Panc1 (cell line): ENCODE measurements at regions of chr1 and their contacts with region 1.

Region 1: DNA sequence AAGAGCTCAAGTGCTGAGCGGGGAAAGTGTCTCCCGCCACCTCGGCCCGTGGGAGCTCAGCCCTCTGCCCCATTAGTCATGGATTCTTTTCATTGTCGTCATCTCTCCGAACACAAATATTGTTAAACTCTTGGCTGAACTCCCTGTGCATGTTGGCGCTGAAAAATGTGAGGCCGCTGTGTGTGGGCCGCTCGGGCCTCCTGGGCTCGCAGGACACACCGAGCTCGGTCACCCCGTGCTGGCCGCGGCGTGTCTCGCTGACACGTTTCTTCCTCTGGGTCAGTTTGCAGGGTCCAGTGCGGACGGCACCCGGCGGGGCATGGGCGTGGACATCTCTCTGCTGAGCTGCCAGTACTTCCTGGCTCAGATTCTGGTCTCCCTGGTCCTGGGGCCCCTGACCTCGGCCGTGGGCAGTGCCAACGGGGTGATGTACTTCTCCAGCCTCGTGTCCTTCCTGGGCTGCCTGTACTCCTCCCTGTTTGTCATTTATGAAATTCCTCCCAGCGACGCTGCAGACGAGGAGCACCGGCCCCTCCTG is 25.6 kb downstream of the SLC45A1 start:
- DNase-seq: peak; percentile 81
- ATAC-seq: peak; percentile 84
- H3K4me3 ChIP-seq: peak overlapping the region in 1 of 2 experiments; percentile 24; a peak in 1 of 4 replicates
- H3K27ac ChIP-seq: peak overlapping the region; percentile 90
- H3K4me1 ChIP-seq: peaks cover 26% of the 10 kb centered on the region
- H3K27me3 ChIP-seq: no peaks in the 10 kb centered on the region
- CTCF ChIP-seq: no peak

Region 2: DNA sequence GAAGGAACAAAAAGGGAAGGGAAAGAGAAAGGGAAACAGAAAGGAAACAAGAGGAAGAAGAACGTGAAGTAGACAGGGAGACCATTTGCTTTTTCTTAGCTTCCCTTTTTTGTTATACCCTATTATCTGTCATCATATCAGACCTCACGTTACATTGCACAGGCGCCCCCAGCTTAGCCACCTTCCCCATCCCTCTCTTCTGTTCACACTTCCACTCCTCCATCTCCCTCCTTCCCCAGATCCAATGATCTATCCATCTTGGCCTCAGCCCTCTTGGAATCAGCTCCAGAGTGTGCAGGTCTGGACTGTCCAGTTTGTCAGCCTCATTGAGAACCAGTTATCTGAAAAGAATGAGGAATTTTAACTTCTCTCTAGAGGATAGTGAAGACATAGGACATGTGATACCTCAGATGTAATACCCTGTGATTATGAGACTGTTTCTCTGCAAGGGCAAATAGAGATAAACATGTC is 216.3 kb before region 1 on chr1:
- CTCF ChIA-PET with region 1: no interaction called
- POLR2A ChIA-PET with region 1: interaction called, 11 read pairs
- in situ Hi-C with region 1: no loop called
- intact Hi-C with region 1: no loop called
- DNase-seq: no peak
- ATAC-seq: no peak
- H3K4me3 ChIP-seq: no peak overlapping the region
- H3K27ac ChIP-seq: peak overlapping the region; percentile 74
- H3K4me1 ChIP-seq: peaks cover 8% of the 10 kb centered on the region
- H3K27me3 ChIP-seq: no peaks in the 10 kb centered on the region
- CTCF ChIP-seq: no peak